ENCODE measurements at regions of chr3 and their contacts with region 1.

Region 1: DNA sequence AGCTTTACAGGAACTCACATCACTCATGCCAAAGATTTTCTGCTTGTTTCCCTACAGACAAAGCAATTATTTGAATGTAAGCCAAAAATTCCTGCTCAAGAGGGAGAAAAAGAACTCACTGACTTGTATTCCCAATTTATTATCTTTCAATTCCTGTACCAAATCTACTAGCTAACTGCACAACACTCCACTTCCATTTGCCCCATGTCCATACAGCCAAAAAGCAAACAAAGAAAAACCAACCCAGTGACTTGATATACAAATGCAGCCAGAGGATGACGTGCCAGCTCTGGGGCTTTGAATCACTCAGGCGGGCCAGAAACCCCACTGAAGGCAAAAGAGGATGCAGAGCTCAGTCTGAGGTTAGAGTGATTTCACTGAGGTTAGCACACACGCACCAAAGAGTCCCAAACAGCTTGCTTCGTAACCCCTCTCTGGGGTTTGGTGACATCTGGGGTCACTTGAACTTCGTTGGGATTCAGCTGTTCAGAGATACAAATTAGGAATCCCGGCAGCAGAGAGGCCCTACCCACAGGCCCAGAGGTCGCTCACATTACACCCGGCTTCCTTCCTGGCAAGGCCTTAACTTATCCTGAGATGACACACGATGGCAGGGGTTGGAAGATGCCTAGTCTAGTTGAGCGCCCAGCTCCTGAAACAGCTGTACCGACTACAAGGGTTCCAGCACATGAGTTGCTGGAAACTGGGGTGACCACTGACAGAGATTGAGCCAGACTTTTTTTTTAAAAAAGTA is 1.6 kb downstream of the RFTN1 start:
- DNase-seq: peak; percentile 38 to 63
- H3K4me3 ChIP-seq: peak overlapping the region; percentile 73 to 92
- H3K27ac ChIP-seq: peak overlapping the region; percentile 78 to 85
- H3K4me1 ChIP-seq: peaks cover 5 to 7% of the 10 kb centered on the region in 2 donors
- H3K27me3 ChIP-seq: no peaks in the 10 kb centered on the region
- CTCF ChIP-seq: no peak
- POLR2A ChIP-seq: no peak

Region 2: DNA sequence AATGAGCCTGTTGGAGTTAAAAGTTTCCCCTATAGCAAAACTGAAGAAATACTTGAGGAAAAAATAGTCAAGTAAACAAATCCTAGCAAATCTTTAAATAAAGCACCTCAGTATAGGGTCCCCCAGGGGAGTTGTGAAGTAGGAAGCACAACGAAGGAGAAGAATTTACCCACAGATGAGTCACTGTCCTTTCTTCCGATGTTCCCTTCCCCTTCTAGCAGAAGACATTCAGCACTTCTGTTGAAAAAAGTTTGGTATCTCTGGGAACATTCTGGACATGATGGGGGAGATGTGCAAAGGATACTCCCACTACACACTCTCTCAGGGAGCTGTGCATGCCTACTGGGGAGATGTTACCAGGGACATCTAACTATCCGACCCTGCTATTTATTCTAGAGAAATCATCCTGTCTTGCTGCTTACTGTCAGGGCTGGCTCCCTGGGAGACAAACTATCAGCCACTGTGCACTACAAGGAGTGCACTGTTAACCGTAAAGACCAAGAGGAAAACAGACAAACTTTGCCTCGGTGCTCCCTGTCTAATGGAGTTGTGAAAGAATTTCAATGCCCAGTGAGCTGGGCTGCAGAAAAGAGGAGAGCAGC is 92.1 kb before region 1 on chr3:
- intact Hi-C with region 1: loop called (anchors 10 kb)
- DNase-seq: no peak
- H3K4me3 ChIP-seq: no peak overlapping the region
- H3K27ac ChIP-seq: peak overlapping the region; percentile 46 to 78
- H3K4me1 ChIP-seq: peaks cover 0 to 4% of the 10 kb centered on the region in 2 donors
- H3K27me3 ChIP-seq: no peaks in the 10 kb centered on the region
- CTCF ChIP-seq: no peak
- POLR2A ChIP-seq: no peak

Region 3: DNA sequence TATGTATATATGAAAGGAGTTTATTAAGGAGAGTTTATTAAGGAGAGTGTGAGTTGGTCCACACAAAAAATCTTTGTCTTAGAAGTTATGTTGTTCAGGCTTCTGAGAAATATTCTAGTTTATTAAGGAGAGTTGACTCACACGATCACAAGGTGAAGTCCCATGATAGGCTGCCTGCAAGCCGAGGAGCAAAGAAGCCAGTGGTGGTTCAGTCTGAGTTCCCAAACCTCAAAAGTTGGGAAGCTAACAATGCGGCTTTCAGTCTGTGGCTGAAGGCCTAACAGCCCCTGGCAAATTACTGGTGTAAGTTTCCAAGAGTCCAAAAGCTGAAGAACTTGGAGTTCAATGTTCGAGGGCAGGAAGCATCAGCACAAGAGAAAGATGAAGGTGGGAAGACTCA is 135.8 kb after region 1 on chr3:
- intact Hi-C with region 1: no loop called
- DNase-seq: no peak
- H3K4me3 ChIP-seq: no peak overlapping the region
- H3K27ac ChIP-seq: no peak overlapping the region
- H3K4me1 ChIP-seq: no peaks in the 10 kb centered on the region
- H3K27me3 ChIP-seq: no peaks in the 10 kb centered on the region
- CTCF ChIP-seq: no peak
- POLR2A ChIP-seq: no peak

Measured in uterus (tissue), 4 donors.